AG04449 (cell line): ENCODE measurements at regions of chr18 and their contacts with region 1.

Region 1: GRCh38 chr18:46173393-46174341 is 69.5 kb downstream of the HAUS1 start:
- DNase-seq: peak; percentile 63
- H3K4me3 ChIP-seq: peak overlapping the region; percentile 93
- CTCF ChIP-seq: peak; percentile 97

Region 2: DNA sequence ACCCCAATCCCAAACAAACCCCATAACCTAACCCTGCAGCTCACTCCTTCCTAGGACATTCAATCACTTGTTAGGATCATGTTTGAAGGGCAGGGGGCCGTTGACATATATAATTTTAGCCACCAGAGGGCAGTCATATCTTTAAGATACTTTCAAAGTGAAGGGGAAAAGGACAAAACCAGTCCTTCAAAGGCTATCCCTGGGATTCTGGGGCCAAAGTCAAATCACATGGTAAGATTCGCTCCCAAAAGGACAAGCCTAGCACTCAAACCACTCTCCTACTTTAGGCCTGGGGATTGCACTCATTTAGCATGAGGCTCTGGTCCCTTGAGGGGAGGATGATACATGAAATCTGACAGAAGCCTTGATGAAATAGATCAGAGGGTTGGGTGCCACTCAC is 24.9 kb before region 1 on chr18:
- CTCF ChIA-PET with region 1: interaction called, 55 read pairs
- POLR2A ChIA-PET with region 1: interaction called, 7 read pairs
- DNase-seq: no peak
- H3K4me3 ChIP-seq: no peak overlapping the region
- CTCF ChIP-seq: peak; percentile 35

Region 3: DNA sequence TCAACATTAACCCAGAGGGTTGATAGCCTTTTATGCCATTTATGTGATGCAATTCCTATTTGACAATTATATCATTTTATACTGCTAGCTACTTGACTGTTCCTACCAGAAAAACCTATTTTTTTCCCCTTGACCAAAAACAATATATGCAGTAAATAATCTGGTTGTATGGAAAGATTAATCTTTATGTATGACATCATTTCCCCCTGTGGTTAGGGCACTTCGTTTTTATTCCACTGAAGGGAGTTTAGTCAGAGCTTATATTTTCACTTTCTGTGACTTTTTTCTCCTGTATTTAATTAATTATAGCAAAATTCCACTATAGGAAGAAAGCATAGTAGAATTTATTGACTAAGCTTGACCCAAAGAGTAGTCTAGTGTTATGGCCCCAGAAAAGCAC is 38.1 kb after region 1 on chr18:
- CTCF ChIA-PET with region 1: interaction called, 13 read pairs
- POLR2A ChIA-PET with region 1: no interaction called
- DNase-seq: no peak
- H3K4me3 ChIP-seq: no peak overlapping the region
- CTCF ChIP-seq: no peak

Region 4: GRCh38 chr18:46239549-46239948 is 65.9 kb after region 1 on chr18:
- CTCF ChIA-PET with region 1: interaction called, 27 read pairs
- POLR2A ChIA-PET with region 1: no interaction called
- DNase-seq: no peak
- H3K4me3 ChIP-seq: no peak overlapping the region
- CTCF ChIP-seq: no peak

Region 5: DNA sequence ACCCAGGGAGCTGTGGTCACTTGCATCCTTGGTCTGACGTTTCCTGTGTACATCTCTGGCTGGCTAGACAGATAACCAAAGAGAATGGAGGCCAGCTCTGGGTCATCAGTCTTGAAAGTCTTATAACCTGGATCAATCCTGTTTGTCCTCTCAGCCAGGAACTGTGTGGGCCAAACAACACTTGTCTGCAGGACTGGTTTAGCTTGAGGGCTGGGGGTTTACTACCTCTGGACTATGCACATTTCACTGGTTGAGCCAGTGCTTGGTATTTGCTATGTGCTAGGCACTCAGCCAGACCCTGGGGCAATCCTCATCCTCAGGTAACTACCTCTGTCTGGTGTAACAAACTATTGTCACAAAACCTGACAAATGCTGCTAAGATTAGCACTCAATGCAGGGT is 100.2 kb after region 1 on chr18:
- CTCF ChIA-PET with region 1: interaction called, 125 read pairs
- POLR2A ChIA-PET with region 1: interaction called, 5 read pairs
- DNase-seq: no peak
- H3K4me3 ChIP-seq: no peak overlapping the region
- CTCF ChIP-seq: no peak

Region 6: DNA sequence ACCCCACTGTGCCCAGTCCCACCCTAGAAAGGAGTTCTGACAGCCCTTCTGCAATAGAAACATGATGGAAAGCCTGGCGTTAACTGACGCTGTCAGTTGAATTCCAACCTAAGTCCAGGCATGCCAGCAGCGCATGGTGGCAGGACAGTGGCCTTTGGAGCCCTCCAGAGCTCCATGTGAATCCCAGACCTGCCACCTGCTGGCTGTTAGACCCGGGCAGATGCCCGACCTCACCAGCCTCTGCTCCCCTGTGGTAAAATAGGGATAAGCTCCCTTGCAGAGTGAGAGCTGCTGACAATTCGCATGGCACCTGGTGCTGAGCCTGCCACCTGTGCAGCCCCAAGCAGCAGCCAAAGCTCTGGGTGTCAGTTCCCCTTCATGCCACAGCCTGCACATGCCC is 344.8 kb after region 1 on chr18:
- CTCF ChIA-PET with region 1: interaction called, 13 read pairs
- POLR2A ChIA-PET with region 1: no interaction called
- DNase-seq: no peak
- H3K4me3 ChIP-seq: no peak overlapping the region
- CTCF ChIP-seq: peak; percentile 4